GM12878 (cell line): ENCODE measurements at regions of chr2 and their contacts with region 1.

Region 1: GRCh38 chr2:40480073-40480472 is 28.2 kb upstream of the SLC8A1 start:
- DNase-seq: no peak
- ATAC-seq: no peak
- H3K4me3 ChIP-seq: no peak overlapping the region
- H3K27ac ChIP-seq: no peak overlapping the region
- H3K4me1 ChIP-seq: no peaks in the 10 kb centered on the region
- H3K27me3 ChIP-seq: no peaks in the 10 kb centered on the region
- CTCF ChIP-seq: no peak
- EP300 ChIP-seq: no peak
- POLR2A ChIP-seq: no peak
- RAD21 ChIP-seq: no peak

Region 2: GRCh38 chr2:40346535-40347354 is 133.3 kb before region 1 on chr2:
- CTCF ChIA-PET with region 1: no interaction called
- POLR2A ChIA-PET with region 1: no interaction called
- RAD21 ChIA-PET with region 1: no interaction called
- SMC1A ChIA-PET with region 1: no interaction called
- in situ Hi-C with region 1: no loop called
- intact Hi-C with region 1: no loop called
- DNase-seq: peak; percentile 5
- ATAC-seq: peak; percentile 62
- H3K4me3 ChIP-seq: no peak overlapping the region
- H3K27ac ChIP-seq: no peak overlapping the region
- H3K4me1 ChIP-seq: no peaks in the 10 kb centered on the region
- H3K27me3 ChIP-seq: no peaks in the 10 kb centered on the region
- CTCF ChIP-seq: no peak
- EP300 ChIP-seq: no peak
- POLR2A ChIP-seq: no peak
- RAD21 ChIP-seq: no peak

Region 3: DNA sequence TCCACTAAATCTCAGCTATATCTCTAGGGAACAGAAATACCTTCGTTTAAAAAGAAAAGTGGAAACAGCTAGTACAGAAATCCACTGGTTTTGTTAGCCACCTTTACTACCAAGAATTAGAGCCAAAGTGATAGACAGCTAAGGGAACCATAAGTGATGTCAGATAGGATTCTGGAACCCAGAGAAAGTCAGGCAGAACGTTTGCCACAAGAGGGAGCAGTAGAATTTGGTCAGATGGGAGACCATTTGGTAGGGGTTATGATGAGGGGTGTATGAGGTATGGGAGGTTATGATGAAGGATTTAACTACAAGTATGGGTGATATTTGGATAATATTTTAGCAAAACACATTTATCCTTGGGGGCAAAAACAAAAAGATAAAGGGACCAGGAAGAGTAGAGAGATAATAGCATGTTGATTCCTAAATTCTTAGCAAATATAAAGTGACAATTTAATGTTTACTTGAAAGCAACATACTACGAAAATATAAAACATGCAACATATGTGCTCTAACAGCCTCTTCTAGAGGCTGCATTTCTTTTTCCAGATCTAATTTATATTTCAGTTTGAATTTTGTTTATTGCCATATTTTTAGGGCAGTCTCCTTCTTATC is 31.5 kb before region 1 on chr2:
- CTCF ChIA-PET with region 1: interaction called, 3 read pairs
- POLR2A ChIA-PET with region 1: no interaction called
- RAD21 ChIA-PET with region 1: no interaction called
- SMC1A ChIA-PET with region 1: interaction called, 10 read pairs
- in situ Hi-C with region 1: no loop called
- intact Hi-C with region 1: no loop called
- DNase-seq: no peak
- ATAC-seq: peak; percentile 61
- H3K4me3 ChIP-seq: no peak overlapping the region
- H3K27ac ChIP-seq: no peak overlapping the region
- H3K4me1 ChIP-seq: no peaks in the 10 kb centered on the region
- H3K27me3 ChIP-seq: peaks cover 5 to 11% of the 10 kb centered on the region in 2 experiments
- CTCF ChIP-seq: peak; percentile 31 to 43 (median 32); a peak in 5 of 6 replicates
- EP300 ChIP-seq: no peak
- POLR2A ChIP-seq: no peak
- RAD21 ChIP-seq: peak; percentile 38; the same call in 1 of the 2 replicates